Activated naive CD8-positive, alpha-beta T cell treated with anti-CD3 and anti-CD28 coated beads, Interleukin-2, amount 10 ng/mL, durations not matched to agents 7 days and 5 days (primary cell): ENCODE measurements at regions of chr17 and their contacts with region 1.

Region 1: GRCh38 chr17:3762922-3763776 is 37.8 kb downstream of the ITGAE start:
- DNase-seq: no peak
- ATAC-seq: peak; percentile 56
- H3K4me3 Mint-ChIP-seq: peak overlapping the region; percentile 79
- H3K27ac Mint-ChIP-seq: peak overlapping the region; percentile 96
- H3K4me1 Mint-ChIP-seq: peaks cover 45% of the 10 kb centered on the region
- H3K27me3 Mint-ChIP-seq: peaks cover 7% of the 10 kb centered on the region

Region 2: GRCh38 chr17:3750926-3751325 is 12.2 kb before region 1 on chr17:
- POLR2A ChIA-PET with region 1: interaction called, 17 read pairs
- DNase-seq: peak; percentile 71
- ATAC-seq: peak; percentile 82
- H3K4me3 Mint-ChIP-seq: peak overlapping the region; percentile 79
- H3K27ac Mint-ChIP-seq: peak overlapping the region; percentile 83
- H3K4me1 Mint-ChIP-seq: peaks cover 23% of the 10 kb centered on the region
- H3K27me3 Mint-ChIP-seq: peaks cover 19% of the 10 kb centered on the region

Region 3: GRCh38 chr17:3777366-3778120 is 14.4 kb after region 1 on chr17:
- POLR2A ChIA-PET with region 1: no interaction called
- DNase-seq: no peak
- ATAC-seq: no peak
- H3K4me3 Mint-ChIP-seq: no peak overlapping the region
- H3K27ac Mint-ChIP-seq: no peak overlapping the region
- H3K4me1 Mint-ChIP-seq: no peaks in the 10 kb centered on the region
- H3K27me3 Mint-ChIP-seq: peaks cover 11% of the 10 kb centered on the region

Region 4: GRCh38 chr17:3796110-3796821 is 33.1 kb after region 1 on chr17:
- POLR2A ChIA-PET with region 1: interaction called, 14 read pairs
- DNase-seq: peak; percentile 75
- ATAC-seq: peak; percentile 84
- H3K4me3 Mint-ChIP-seq: peak overlapping the region; percentile 33
- H3K27ac Mint-ChIP-seq: peak overlapping the region; percentile 63
- H3K4me1 Mint-ChIP-seq: peaks cover 46% of the 10 kb centered on the region
- H3K27me3 Mint-ChIP-seq: peaks cover 17% of the 10 kb centered on the region

Region 5: GRCh38 chr17:3815925-3816324 is 52.8 kb after region 1 on chr17:
- POLR2A ChIA-PET with region 1: no interaction called
- DNase-seq: no peak
- ATAC-seq: no peak
- H3K4me3 Mint-ChIP-seq: no peak overlapping the region
- H3K27ac Mint-ChIP-seq: no peak overlapping the region
- H3K4me1 Mint-ChIP-seq: no peaks in the 10 kb centered on the region
- H3K27me3 Mint-ChIP-seq: no peaks in the 10 kb centered on the region